ENCODE measurements at regions of chr1 and their contacts with region 1.

Region 1: GRCh38 chr1:87243573-87243972 is 85.1 kb upstream of the LMO4 start:
- DNase-seq: no peak

Region 2: GRCh38 chr1:85638412-85638811 is 1605.2 kb before region 1 on chr1:
- intact Hi-C with region 1: loop called in 1 of 2 experiments (anchors 10 kb)
- DNase-seq: no peak

Region 3: DNA sequence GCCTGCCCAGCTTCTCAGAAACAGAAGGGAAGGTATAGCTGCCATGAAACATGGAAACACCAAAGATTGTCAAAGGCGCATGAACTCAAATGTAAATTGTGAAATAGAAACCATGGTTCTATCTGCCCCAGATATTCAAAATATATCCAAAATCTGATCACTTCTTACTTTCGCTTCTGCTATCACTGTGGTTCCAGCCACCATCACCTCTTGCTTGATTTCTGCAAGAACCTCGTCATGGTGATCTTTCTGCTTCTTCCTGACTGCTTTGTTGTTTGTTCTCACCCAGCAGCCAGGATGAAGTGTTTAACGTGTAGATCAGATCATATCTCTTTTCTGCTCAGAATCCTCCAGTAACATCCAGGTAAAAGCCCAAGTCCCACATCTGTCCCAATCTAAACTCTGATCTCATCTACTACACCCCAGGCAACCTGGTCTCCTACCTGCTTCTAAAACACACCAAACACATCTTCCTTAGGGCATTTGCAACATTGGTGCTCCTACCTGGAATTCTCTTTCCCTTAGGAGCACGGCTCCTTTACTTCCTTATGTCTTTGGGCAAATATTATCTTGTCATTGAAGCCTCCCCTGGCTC is 74.6 kb after region 1 on chr1:
- intact Hi-C with region 1: loop called in 1 of 2 experiments (anchors 2 kb)
- DNase-seq: no peak

Region 4: DNA sequence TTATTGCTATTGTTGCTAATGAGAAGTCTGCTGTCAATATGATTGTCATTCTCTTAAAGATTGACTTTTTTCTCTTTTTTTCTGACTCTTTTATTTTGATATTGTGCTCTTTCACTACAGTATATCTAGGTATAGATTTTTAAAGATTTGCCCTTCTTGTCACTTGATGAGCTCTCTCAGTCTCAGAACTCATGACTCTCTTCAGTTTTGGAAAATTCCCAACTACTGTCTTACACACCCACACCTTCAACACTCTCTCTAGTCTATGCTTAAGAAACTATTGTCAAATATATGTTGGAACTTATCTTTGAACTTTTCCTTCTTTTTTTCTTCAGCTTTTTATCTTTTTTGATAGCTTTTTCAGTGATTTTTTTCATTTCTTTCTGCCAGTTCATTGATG is 135.7 kb after region 1 on chr1:
- intact Hi-C with region 1: no loop called
- DNase-seq: no peak

Measured in posterior vena cava (tissue), 2 donors.